ENCODE measurements at regions of chr18 and their contacts with region 1.

Region 1: GRCh38 chr18:42742969-42743368 is 372.5 kb downstream of the RIT2 start:
- DNase-seq: no peak
- ATAC-seq: no peak

Region 2: GRCh38 chr18:43060020-43060419 is 317.1 kb after region 1 on chr18:
- intact Hi-C with region 1: loop called in 1 of 2 experiments (anchors 10 kb)
- DNase-seq: no peak
- ATAC-seq: peak in 1 of 2 donors; percentile 85